Activated CD4-positive, alpha-beta T cell treated with anti-CD3 and anti-CD28 coated beads for 36 hours (primary cell): ENCODE measurements at regions of chr7 and their contacts with region 1.

Region 1: DNA sequence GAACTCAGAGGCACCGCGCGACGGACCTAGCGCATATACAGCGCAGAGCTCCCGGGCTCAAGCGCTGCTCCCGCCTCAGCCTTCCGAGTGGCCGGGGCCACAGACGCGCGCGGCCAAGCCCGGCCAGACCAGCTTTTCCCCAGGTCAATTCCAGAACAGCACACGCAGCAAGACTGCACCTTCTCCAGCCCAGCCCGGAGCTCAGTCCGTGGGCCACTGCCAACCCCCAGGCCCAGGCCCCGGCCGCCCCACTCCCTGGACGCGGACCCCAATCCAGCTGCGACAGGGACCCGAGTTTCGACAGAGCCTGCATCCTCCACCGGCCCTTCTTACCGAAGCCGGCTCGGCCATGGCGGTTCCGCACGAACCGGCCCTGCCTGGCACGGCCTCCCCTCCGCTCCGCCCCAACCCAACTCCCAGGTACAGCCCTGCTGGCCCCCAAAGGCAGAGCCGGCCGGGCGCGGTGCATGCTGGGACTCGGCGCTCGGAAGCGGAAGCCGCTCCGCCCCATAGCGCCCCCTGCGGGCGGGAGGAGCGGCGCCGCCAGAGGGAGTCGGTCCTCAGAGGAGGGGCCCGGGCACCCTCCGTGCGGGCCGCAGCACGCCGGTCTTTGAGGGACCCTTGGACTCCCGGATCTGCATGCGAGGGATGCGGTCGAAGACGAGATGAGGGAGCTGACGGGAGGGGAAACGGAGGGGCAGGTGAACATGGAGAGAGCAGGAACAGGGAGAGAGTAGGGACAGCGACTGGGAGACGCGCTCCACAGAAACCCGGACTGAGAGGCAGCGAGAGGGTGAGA is at the start of gene ZNF425:
- DNase-seq: peak; percentile 96
- ATAC-seq: peak; percentile 88
- H3K4me3 Mint-ChIP-seq: peak within 1 kb of the TSS; percentile 83
- H3K27ac Mint-ChIP-seq: peak within 1 kb of the TSS; percentile 99
- H3K4me1 Mint-ChIP-seq: peaks cover 21% of the 10 kb centered on the region
- H3K27me3 Mint-ChIP-seq: no peaks in the 10 kb centered on the region
- total RNA-seq, gene ZNF425: 0.43 to 0.95 TPM

Region 2: GRCh38 chr7:148535217-148535616 is 590.8 kb before region 1 on chr7:
- CTCF ChIA-PET with region 1: no interaction called
- POLR2A ChIA-PET with region 1: no interaction called
- intact Hi-C with region 1: no loop called
- DNase-seq: peak; percentile 68
- ATAC-seq: peak; percentile 90
- H3K4me3 Mint-ChIP-seq: peak overlapping the region; percentile 57
- H3K27ac Mint-ChIP-seq: peak overlapping the region; percentile 73
- H3K4me1 Mint-ChIP-seq: peaks cover 11% of the 10 kb centered on the region
- H3K27me3 Mint-ChIP-seq: peaks cover 21% of the 10 kb centered on the region

Region 3: GRCh38 chr7:148987010-148987750 is 138.9 kb before region 1 on chr7:
- CTCF ChIA-PET with region 1: interaction called, 3 read pairs
- POLR2A ChIA-PET with region 1: no interaction called
- intact Hi-C with region 1: loop called in 1 of 2 experiments (anchors 1 kb)
- DNase-seq: peak; percentile 88
- ATAC-seq: peak; percentile 84
- H3K4me3 Mint-ChIP-seq: peak overlapping the region; percentile 90
- H3K27ac Mint-ChIP-seq: peak overlapping the region; percentile 97
- H3K4me1 Mint-ChIP-seq: peaks cover 40% of the 10 kb centered on the region
- H3K27me3 Mint-ChIP-seq: peaks cover 2% of the 10 kb centered on the region

Region 4: DNA sequence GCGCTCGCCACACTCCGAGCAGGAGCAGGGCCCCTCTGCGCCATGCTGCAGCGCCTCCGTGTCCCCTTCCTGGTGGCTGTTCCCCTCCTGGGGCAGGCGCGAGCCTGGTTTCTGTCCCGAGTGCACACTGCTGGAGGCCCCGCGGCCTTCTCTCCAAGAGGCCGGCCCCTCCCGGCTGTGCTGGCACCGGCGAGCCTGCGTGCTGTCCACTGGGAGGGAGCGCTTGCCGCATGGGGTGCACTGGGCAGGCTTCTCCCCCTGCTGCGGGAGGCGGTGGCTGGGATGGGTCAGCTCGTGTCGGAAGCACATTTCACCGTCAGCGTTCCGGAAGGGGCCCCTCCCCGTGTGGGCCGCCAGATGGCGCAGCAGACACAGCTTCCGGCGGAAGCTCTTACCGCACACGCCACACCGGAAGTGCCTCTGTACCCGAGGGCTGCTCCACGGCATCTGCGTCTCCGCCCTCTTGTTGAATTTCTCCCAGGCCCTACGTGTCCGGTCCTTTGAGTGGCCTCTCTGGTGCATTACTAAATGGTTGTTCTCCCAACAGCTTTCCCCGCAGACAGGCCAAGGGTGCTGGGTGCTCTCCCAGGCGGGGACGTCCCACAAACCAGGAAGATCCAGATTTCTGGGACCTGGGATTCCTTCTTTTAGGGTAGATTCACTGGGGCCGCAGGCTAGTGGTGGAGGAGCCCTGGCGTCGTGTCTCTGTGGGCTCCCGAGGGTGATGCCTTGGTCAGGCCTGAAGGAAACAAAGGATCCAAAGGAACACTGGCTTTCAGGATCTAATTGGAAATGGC is 54.2 kb before region 1 on chr7:
- CTCF ChIA-PET with region 1: interaction called, 4 read pairs
- POLR2A ChIA-PET with region 1: no interaction called
- intact Hi-C with region 1: loop called in 1 of 2 experiments (anchors 2 kb)
- DNase-seq: peak; percentile 70
- ATAC-seq: peak; percentile 84
- H3K4me3 Mint-ChIP-seq: peak overlapping the region; percentile 46
- H3K27ac Mint-ChIP-seq: peak overlapping the region; percentile 63
- H3K4me1 Mint-ChIP-seq: peaks cover 9% of the 10 kb centered on the region
- H3K27me3 Mint-ChIP-seq: no peaks in the 10 kb centered on the region

Region 5: GRCh38 chr7:149147072-149147751 is 21.1 kb after region 1 on chr7 and contains the start of gene ZNF398:
- CTCF ChIA-PET with region 1: interaction called, 31 read pairs
- POLR2A ChIA-PET with region 1: interaction called, 11 read pairs
- intact Hi-C with region 1: loop called (anchors 1 kb)
- DNase-seq: peak; percentile 87
- ATAC-seq: peak; percentile 71
- H3K4me3 Mint-ChIP-seq: peak within 1 kb of the TSS; percentile 98
- H3K27ac Mint-ChIP-seq: peak within 1 kb of the TSS; percentile 99
- H3K4me1 Mint-ChIP-seq: peaks cover 34% of the 10 kb centered on the region
- H3K27me3 Mint-ChIP-seq: no peaks in the 10 kb centered on the region
- total RNA-seq, gene ZNF398: 9.6 to 10.5 TPM

Region 6: DNA sequence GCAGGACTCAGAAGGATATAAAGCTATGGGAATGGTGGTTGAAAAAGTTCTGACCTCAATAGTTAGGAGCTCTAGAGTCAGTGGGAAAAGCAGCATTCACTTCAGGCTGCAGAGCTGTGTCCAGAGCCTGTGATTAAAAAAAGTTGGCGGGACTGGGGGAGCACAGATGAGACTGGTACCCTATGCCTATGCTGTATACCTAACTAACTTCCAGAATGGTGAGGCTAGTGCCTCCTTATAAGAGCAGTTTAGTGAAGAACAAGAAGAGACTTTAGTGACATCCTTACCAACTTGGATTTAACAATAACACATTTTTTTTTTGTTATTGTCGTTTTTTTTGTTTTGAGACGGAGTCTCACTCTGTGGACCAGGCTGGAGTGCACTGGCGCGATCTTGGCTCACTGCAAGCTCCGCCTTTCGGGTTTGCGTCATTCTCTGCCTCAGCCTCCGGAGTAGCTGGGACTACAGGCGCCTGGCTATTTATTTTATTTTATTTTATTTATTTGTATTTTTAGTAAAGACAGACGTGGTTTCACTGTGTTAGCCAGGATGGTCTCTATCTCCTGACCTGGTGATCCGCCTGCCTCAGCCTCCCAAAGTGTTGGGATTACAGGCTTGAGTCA is 62.7 kb after region 1 on chr7:
- CTCF ChIA-PET with region 1: no interaction called
- POLR2A ChIA-PET with region 1: no interaction called
- intact Hi-C with region 1: no loop called
- DNase-seq: no peak
- ATAC-seq: no peak
- H3K4me3 Mint-ChIP-seq: no peak overlapping the region
- H3K27ac Mint-ChIP-seq: no peak overlapping the region
- H3K4me1 Mint-ChIP-seq: peaks cover 8% of the 10 kb centered on the region
- H3K27me3 Mint-ChIP-seq: no peaks in the 10 kb centered on the region

Region 7: DNA sequence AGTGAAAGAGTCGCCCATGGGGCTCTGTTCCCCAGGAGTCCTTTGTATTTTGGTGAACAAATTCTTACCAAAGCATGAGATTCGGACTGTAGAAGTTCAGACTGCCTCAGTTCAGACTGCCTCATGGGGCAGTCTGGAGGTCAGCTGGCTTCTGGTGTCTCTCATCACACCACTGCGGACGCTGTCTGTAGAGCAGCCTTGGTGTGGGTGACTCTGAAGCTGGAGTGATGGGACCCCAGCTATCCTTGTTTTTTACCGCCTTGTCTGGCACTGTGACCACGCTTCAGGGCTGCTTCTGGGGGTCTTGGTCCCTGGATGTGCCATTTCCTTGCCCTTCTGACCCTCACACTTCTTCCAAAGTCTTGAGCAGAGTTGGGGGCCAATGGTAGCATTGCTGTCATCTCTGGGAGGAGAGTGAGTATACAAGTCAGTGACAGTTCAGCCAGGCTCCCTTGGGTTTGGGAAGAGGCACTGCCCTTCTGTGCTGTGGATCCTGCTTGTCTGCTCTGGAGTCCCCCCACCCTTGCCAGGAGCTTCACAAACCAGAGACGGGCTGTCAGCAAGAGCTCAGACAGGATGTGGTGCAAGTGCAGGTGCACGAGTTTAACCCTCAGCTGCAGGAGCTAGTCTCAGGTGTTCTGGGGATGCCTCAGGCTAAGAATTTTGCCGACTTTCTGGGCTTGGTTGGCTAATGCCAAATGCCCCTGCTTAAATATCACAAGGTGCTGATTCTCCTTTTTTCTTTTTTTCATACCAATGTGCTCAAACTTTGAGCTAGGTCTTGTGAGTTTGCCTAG is 158.1 kb after region 1 on chr7:
- CTCF ChIA-PET with region 1: no interaction called
- POLR2A ChIA-PET with region 1: no interaction called
- intact Hi-C with region 1: no loop called
- DNase-seq: peak; percentile 69
- ATAC-seq: peak; percentile 23
- H3K4me3 Mint-ChIP-seq: peak overlapping the region; percentile 84
- H3K27ac Mint-ChIP-seq: peak overlapping the region; percentile 61
- H3K4me1 Mint-ChIP-seq: peaks cover 38% of the 10 kb centered on the region
- H3K27me3 Mint-ChIP-seq: no peaks in the 10 kb centered on the region

Region 8: DNA sequence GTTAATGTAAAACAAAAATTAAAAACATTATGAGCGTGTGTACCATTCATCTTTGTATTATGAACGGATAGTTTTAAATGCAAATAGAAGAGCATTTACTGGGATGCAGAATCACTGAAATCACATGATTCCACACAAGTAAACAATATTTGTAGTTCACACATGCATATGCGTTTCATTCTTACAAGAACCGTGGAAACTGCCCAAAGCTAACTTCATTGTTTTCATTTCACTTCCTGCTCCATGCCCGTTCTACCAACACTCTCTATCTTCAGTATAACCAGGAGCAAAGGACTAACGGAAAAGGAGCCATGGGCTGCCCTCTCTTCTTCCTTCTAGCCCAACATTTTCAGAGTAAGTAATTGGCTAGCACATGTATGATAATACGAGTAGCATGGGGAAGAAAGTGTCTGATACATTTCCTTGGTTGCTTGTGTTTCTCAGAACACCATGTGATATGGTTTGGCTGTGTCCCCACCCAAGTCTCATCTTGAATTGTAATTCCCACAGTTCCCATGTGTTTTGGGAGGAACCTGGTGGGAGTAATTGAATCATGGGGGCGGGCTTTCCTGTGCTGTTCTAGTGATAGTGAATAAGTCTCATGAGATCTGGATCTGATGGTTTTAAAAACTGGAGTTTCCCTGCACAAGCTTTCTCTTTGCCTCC is 174.7 kb after region 1 on chr7:
- CTCF ChIA-PET with region 1: no interaction called
- POLR2A ChIA-PET with region 1: no interaction called
- intact Hi-C with region 1: no loop called
- DNase-seq: no peak
- ATAC-seq: no peak
- H3K4me3 Mint-ChIP-seq: no peak overlapping the region
- H3K27ac Mint-ChIP-seq: no peak overlapping the region
- H3K4me1 Mint-ChIP-seq: peaks cover 15% of the 10 kb centered on the region
- H3K27me3 Mint-ChIP-seq: no peaks in the 10 kb centered on the region